Tibial artery (tissue), 4 donors: ENCODE measurements at regions of chr10 and their contacts with region 1.

Region 1: GRCh38 chr10:16843252-16843870 is 26.1 kb upstream of the RSU1 start:
- DNase-seq: no peak
- H3K4me3 ChIP-seq: no peak overlapping the region
- H3K27ac ChIP-seq: no peak overlapping the region
- H3K4me1 ChIP-seq: peaks cover 0 to 14% (median 8%) of the 10 kb centered on the region in 4 donors
- H3K27me3 ChIP-seq: no peaks in the 10 kb centered on the region
- CTCF ChIP-seq: peak; percentile 55 to 63

Region 2: DNA sequence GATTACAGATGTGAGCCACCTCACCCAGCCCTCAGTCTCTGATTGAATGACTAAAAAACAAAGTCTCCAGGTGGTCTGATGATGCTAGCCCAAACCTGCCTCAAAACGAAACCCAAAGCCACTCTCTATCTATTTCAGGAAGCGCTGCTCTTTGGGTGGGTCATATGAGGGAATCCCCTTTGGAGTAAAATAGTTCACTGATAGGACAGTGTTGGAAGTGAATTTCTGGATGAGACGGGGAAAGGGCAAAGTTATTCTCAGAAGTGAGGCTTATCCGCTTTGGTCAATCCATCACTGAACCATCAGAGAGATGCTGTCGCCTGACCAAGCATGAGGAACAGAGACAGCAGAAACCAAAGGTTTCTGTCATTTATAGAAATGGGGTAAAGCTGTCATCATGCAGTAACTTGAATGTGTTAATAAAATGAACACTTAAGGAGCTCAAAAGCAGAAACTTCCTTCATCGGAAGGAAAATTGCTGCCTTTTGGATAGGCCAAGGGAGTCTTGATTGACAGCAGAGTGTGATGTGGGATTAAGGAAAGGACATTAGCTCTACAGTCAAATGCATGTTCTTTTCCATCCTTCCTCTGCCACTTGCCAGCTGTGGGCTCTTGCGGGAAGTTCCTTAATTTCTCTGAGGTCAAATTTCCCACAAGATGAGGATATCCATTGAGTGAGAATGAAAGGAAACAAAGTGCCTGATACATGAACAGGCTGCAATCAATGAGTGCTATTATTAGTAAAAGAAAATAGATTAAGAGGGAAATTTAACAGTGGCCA is 256.8 kb before region 1 on chr10:
- intact Hi-C with region 1: no loop called
- DNase-seq: no peak
- H3K4me3 ChIP-seq: no peak overlapping the region
- H3K27ac ChIP-seq: no peak overlapping the region
- H3K4me1 ChIP-seq: peaks cover 0 to 2% (median 0%) of the 10 kb centered on the region in 4 donors
- H3K27me3 ChIP-seq: no peaks in the 10 kb centered on the region
- CTCF ChIP-seq: no peak

Region 3: DNA sequence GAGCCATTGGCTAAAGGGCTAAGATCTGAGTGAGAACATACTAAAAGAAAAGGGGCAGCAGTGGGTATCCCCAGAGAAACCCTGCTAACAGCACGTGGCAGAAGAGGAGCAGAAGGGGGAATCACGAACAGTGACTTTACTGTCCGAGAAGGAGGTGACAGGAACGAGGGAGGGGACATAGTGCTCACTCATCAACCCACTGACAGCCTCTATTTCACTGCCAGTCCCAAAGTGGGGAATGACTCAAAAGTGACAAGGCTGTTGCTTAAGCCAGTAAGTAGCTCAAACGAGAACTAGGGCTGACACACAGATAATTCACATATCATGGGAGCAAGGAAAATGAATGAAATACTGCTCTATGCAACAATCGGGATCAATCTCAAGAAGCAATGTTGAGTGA is 118.9 kb before region 1 on chr10:
- intact Hi-C with region 1: no loop called
- DNase-seq: no peak
- H3K4me3 ChIP-seq: no peak overlapping the region
- H3K27ac ChIP-seq: no peak overlapping the region
- H3K4me1 ChIP-seq: no peaks in the 10 kb centered on the region
- H3K27me3 ChIP-seq: no peaks in the 10 kb centered on the region
- CTCF ChIP-seq: no peak

Region 4: DNA sequence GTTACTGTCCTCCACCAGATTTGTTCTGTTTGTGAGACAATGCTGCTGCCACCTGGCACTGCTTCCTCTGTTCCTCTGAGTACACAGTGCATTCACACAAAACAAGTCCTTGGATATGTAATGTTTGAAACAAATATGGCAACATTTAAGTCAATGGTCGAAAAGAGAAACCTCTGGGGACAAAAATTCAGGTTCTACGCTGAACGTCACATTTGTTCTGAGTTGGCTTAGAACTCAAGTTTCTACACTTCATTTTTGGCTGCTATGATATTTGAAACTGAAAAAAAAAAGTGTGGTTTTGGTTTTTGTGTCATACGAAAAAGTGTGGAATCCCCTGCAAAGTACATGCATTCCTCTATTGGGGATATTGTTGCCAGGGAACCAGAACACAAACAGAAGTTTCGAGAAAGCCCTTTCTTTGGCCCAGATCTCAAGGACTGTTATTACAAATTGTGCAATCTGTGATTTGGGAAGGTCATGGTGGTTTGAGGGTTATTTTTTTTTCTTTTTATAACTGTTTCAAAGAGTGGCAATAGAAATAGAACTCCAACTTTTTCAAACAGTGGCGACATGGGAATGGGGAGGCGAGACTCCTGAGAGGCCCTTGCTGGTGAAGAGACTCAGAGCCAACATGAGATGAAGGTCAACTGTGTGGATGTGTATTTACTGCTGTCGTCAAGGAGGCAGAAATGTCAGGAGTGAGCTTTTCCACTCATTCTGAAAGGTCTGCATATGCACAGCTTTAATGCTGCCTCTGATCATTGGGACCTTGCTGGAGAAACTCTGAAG is 158.8 kb after region 1 on chr10:
- intact Hi-C with region 1: loop called (anchors 10 kb)
- DNase-seq: peak; percentile 55 to 80
- H3K4me3 ChIP-seq: peak overlapping the region; percentile 1 to 6
- H3K27ac ChIP-seq: peak overlapping the region; percentile 65 to 81
- H3K4me1 ChIP-seq: peaks cover 0 to 60% (median 25%) of the 10 kb centered on the region in 4 donors
- H3K27me3 ChIP-seq: no peaks in the 10 kb centered on the region
- CTCF ChIP-seq: no peak

Region 5: DNA sequence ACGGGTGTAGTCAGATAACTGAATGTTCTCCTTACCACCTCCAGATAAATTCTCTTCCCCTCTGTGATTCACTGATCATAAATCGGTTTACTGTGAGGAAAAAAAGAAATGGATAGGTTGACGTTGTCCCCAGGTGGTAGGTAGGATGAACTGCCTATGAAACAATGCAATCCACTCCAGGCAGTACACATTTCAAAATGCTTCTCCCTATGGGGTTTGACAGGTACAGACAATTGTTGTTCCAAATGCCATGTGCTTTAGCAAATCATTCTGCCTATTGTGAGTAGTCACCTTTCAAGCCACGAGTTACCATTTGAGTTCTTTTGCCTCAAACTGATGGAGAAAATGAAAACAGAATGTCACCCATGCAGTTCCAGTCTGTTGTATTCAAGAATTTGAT is 406.5 kb after region 1 on chr10:
- intact Hi-C with region 1: loop called (anchors 5 kb)
- DNase-seq: no peak
- H3K4me3 ChIP-seq: no peak overlapping the region
- H3K27ac ChIP-seq: no peak overlapping the region
- H3K4me1 ChIP-seq: peaks cover 0 to under 1% (median 0%) of the 10 kb centered on the region in 4 donors
- H3K27me3 ChIP-seq: no peaks in the 10 kb centered on the region
- CTCF ChIP-seq: peak; percentile 32 to 33

Region 6: DNA sequence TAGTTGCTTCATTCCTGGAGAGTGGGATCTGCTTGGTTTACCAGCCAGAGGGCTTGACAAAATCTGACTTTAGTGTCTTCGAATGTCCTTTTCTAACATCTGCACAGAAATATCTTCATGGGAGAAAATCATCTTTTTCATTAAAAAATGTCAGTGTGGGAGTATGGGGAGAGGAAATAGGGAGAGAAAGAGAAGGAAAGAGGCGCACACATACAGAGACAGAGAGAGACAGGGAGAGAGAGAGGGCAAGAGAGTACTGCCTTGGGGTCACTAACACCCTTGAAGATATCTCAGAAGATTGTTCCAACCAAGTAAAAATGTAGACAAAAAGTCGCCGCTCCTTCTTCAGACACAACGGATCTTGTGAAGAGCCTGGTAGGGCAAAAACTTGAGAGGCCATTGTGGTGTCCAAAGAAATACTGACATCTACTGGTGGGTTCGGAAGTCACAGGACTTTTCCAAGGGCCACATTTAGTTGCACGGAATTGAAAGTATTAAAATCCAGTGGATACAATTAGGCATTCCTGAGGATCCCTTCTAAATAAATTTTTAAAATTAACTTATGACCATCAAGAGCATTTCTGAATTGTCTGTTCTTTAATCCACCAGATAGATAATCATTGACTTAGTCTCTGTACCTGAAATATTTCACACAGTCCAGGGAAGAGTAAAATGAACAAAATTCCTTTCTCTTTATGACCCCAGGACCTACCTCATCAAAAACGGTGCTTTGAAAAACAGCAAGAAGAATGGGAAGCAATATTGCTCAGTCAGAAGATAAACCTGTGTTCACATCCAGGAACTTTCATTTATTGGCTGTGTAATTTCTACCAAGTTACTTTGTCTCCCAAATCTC is 414.3 kb after region 1 on chr10:
- intact Hi-C with region 1: loop called (anchors 2 kb)
- DNase-seq: peak in 1 of 2 donors; percentile 50
- H3K4me3 ChIP-seq: peak overlapping the region; percentile 22 to 27
- H3K27ac ChIP-seq: peak overlapping the region in 1 of 2 donors; percentile 35
- H3K4me1 ChIP-seq: peaks cover 0 to 7% (median 2%) of the 10 kb centered on the region in 4 donors
- H3K27me3 ChIP-seq: no peaks in the 10 kb centered on the region
- CTCF ChIP-seq: peak; percentile 82 to 85

Region 7: DNA sequence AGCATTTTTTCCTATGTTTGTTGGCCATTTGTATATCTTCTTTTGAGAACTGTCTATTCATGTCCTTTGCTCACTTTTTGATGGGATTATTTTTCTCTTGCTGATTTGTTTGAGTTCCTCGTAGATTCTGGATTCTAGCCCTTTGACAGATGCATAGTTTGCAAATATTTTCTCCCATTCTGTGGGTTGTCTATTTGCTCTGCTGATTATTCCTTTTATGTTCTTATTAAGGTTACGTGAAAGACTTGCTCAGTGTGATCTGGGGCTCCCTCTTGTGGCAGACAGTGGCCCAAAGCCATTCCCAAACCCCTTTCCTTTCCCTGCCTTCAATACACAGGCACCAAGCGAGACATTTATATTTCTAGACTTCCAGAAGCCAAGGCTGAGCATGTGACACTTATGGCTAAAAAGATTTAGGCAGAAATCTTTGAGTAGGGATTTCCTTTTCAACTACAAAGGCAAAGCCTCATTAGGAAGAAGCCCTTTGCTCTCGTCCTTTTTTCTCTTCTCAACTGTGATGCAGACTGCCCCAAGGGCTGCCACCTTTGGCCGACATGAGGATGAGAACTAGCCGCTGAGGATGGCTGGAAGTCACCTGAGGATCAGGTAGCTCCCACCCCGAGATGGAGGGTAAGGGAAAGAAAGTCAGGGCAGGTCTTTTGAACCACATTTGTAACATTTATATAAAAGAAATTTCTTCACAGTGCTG is 587.4 kb after region 1 on chr10:
- intact Hi-C with region 1: loop called (anchors 5 kb)
- DNase-seq: peak; percentile 73 to 85
- H3K4me3 ChIP-seq: no peak overlapping the region
- H3K27ac ChIP-seq: no peak overlapping the region
- H3K4me1 ChIP-seq: peaks cover 0 to 23% (median 11%) of the 10 kb centered on the region in 4 donors
- H3K27me3 ChIP-seq: peaks cover 0 to 2% of the 10 kb centered on the region in 2 donors
- CTCF ChIP-seq: peak; percentile 81 to 87